ENCODE measurements at regions of chr19 and their contacts with region 1.

Region 1: DNA sequence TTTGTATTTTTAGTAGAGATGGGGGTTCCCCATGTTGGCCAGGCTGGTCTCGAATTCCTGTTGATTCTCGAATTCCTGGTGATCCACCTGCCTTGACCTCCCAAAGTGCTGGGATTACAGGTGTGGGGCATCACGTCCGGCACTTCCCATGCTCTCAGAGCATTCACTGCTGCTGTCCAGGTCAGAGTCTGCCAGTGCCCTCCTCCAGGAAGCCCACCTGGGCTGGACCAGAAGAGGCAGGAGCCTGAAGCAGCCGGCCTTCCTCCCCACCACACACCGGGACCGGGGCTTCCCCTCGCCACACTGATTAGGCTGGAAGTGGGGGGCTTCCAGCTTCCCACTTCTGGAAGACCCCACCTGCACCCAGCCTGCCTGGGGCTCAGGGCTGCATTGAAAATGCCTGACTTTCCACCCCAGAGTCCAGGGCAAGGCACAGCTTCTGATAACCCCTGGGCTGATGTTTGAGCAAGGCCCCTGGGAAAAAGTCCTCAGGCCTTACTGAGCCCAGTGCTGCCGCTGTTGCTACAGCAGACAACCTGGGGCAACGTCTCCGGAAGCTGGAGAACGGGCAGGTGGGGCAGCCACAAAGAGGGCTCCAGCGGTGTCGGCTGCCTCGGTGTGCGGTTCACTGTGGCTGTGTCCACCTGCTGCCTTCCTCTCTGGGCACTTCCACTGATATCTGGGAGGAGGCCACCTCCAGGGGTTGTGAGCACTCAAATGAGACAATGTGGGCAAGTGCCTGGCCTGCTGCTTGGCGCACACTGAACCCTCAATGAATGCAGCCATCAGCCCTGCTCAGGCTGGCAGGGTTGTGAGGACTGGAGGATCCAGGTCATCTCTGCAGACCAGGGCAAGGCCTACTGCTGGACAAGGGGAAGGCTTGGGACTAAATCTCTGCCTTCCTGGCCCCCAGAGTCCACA is 22.6 kb downstream of the CEBPA start:
- DNase-seq: peak; percentile 74
- ATAC-seq: peak; percentile 47
- H3K4me3 ChIP-seq: no peak overlapping the region; a peak in 1 of 6 replicates
- H3K27ac ChIP-seq: peak overlapping the region; percentile 94
- H3K4me1 ChIP-seq: peaks cover 78% of the 10 kb centered on the region
- H3K27me3 ChIP-seq: no peaks in the 10 kb centered on the region
- CTCF ChIP-seq: peak; percentile 49
- EP300 ChIP-seq: peak in 1 of 2 experiments; percentile 45; a peak in 1 of 4 replicates
- POLR2A ChIP-seq: peak; percentile 24 to 59; a peak in 3 of 4 replicates
- RAD21 ChIP-seq: peak; percentile 46; the same call in 1 of the 2 replicates

Region 2: DNA sequence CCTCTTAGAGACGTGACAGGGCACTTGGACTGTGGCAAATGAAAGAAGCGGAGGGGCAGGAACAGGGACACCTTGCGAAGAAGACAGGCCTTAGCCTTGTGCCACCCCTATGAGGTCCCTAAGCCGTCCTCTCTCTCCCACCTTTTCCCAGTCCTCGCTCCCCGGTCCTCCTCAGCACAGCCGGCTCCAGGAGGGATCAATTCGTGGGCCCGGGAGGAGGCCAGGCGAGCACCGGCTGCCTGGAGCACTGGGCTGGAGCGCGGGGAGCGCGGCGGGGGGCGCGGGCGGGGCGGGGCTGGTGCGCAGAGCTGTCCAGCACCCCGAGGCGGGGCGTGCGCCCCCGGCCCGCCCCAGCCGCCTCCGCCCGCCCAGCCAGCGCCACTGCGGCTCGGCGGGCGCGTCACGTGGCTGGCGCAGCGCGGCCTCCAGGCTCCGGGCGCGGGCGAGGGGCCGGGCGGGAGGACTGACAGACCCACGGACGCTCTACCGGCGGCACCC is 85.8 kb before region 1 on chr19 and contains the start of gene LRP3:
- CTCF ChIA-PET with region 1: no interaction called
- POLR2A ChIA-PET with region 1: no interaction called
- in situ Hi-C with region 1: no loop called
- intact Hi-C with region 1: no loop called
- DNase-seq: no peak
- ATAC-seq: peak; percentile 18; the same call in 2 of the 3 replicates
- H3K4me3 ChIP-seq: peak within 1 kb of the TSS; percentile 73 to 78 (median 76)
- H3K27ac ChIP-seq: peak within 1 kb of the TSS; percentile 85
- H3K4me1 ChIP-seq: peaks cover 42% of the 10 kb centered on the region
- H3K27me3 ChIP-seq: peaks cover 1 to 6% of the 10 kb centered on the region in 2 experiments; a peak in 2 of 5 replicates
- CTCF ChIP-seq: no peak
- EP300 ChIP-seq: no peak
- POLR2A ChIP-seq: peak in 1 of 2 experiments; percentile 38; a peak in 1 of 4 replicates
- RAD21 ChIP-seq: no peak
- total RNA-seq, gene LRP3: 45.1 and 51.6 TPM in 2 replicates

Region 3: GRCh38 chr19:33248954-33249613 is 30.6 kb before region 1 on chr19:
- CTCF ChIA-PET with region 1: no interaction called
- POLR2A ChIA-PET with region 1: interaction called, 15 read pairs
- in situ Hi-C with region 1: no loop called
- intact Hi-C with region 1: loop called (anchors 1 kb)
- DNase-seq: peak; percentile 53
- ATAC-seq: peak; percentile 59
- H3K4me3 ChIP-seq: peak overlapping the region; percentile 25 to 69 (median 27); a peak in 5 of 6 replicates
- H3K27ac ChIP-seq: peak overlapping the region; percentile 83
- H3K4me1 ChIP-seq: peaks cover 62% of the 10 kb centered on the region
- H3K27me3 ChIP-seq: peaks cover 3 to 4% of the 10 kb centered on the region in 2 experiments; a peak in 3 of 5 replicates
- CTCF ChIP-seq: peak; percentile 69
- EP300 ChIP-seq: no peak
- POLR2A ChIP-seq: no peak
- RAD21 ChIP-seq: peak; percentile 36; the same call in 1 of the 2 replicates

Region 4: GRCh38 chr19:33292595-33293441 is 13.1 kb after region 1 on chr19:
- CTCF ChIA-PET with region 1: no interaction called
- POLR2A ChIA-PET with region 1: interaction called, 380 read pairs
- in situ Hi-C with region 1: no loop called
- intact Hi-C with region 1: loop called (anchors 2 kb)
- DNase-seq: no peak
- ATAC-seq: peak; percentile 4; the same call in 2 of the 3 replicates
- H3K4me3 ChIP-seq: peak overlapping the region; percentile 39 to 69 (median 41); a peak in 5 of 6 replicates
- H3K27ac ChIP-seq: peak overlapping the region; percentile 91
- H3K4me1 ChIP-seq: peaks cover 93% of the 10 kb centered on the region
- H3K27me3 ChIP-seq: no peaks in the 10 kb centered on the region
- CTCF ChIP-seq: no peak
- EP300 ChIP-seq: no peak
- POLR2A ChIP-seq: no peak
- RAD21 ChIP-seq: no peak

Region 5: GRCh38 chr19:33358408-33358807 is 78.7 kb after region 1 on chr19:
- CTCF ChIA-PET with region 1: no interaction called
- POLR2A ChIA-PET with region 1: no interaction called
- in situ Hi-C with region 1: no loop called
- intact Hi-C with region 1: no loop called
- DNase-seq: no peak
- ATAC-seq: no peak
- H3K4me3 ChIP-seq: no peak overlapping the region
- H3K27ac ChIP-seq: no peak overlapping the region
- H3K4me1 ChIP-seq: no peaks in the 10 kb centered on the region
- H3K27me3 ChIP-seq: 0 out of 5 replicates have a peak, but pooled peaks cover 0 to 8% of the 10 kb centered on the region in 2 experiments
- CTCF ChIP-seq: no peak
- EP300 ChIP-seq: no peak
- POLR2A ChIP-seq: no peak
- RAD21 ChIP-seq: no peak

Region 6: DNA sequence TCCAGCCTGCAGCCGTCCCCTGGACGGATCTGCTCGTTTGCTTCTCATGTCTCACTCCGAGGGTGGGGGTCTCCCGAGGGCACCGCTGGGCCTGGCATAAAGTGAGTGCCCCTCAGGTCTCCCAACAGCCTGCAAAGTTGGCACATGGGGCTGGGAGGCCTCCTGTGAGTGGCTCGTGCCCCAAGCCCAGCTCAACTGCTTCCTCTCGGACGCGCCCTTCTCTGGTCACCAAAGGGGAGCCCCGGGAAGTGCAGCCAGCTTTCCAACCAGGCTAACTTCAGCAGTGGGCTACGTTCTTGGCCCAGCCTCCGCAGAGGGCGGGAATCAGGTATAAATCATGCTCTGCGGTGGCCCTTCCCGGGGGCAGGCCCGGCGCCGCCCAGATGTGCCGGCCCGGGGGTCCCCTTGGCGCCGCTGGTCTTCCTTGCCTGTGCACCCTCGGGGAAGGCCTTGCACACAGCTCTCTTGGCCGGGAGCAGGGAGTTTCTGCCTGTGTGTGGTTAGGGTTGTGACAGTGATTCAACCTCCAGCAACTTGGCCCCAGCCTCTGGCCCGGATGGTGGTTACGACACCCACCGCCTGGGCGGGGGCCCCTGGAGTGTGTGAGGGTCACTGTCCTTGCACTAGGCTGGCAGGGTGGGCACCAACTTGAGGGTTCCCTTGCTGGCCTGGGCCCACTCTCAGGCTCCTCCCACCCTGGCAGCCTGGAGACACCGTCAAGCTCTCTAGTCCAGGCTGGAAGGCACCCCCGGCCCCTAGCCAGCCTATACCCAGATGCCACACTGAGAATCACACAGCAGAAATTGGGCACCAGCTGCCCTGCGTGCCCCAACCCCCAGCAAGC is 114.5 kb after region 1 on chr19:
- CTCF ChIA-PET with region 1: no interaction called
- POLR2A ChIA-PET with region 1: interaction called, 13 read pairs
- in situ Hi-C with region 1: no loop called
- intact Hi-C with region 1: no loop called
- DNase-seq: peak; percentile 55
- ATAC-seq: peak; percentile 5
- H3K4me3 ChIP-seq: peak overlapping the region; percentile 15 to 64 (median 33); a peak in 4 of 6 replicates
- H3K27ac ChIP-seq: peak overlapping the region; percentile 94
- H3K4me1 ChIP-seq: peaks cover 95% of the 10 kb centered on the region
- H3K27me3 ChIP-seq: no peaks in the 10 kb centered on the region
- CTCF ChIP-seq: no peak
- EP300 ChIP-seq: no peak; a peak in 1 of 4 replicates
- POLR2A ChIP-seq: peak; percentile 36 to 44; a peak in 1 of 4 replicates
- RAD21 ChIP-seq: peak; percentile 45; the same call in 1 of the 2 replicates